GM12878 (cell line): ENCODE measurements at regions of chr6 and their contacts with region 1.

Region 1: DNA sequence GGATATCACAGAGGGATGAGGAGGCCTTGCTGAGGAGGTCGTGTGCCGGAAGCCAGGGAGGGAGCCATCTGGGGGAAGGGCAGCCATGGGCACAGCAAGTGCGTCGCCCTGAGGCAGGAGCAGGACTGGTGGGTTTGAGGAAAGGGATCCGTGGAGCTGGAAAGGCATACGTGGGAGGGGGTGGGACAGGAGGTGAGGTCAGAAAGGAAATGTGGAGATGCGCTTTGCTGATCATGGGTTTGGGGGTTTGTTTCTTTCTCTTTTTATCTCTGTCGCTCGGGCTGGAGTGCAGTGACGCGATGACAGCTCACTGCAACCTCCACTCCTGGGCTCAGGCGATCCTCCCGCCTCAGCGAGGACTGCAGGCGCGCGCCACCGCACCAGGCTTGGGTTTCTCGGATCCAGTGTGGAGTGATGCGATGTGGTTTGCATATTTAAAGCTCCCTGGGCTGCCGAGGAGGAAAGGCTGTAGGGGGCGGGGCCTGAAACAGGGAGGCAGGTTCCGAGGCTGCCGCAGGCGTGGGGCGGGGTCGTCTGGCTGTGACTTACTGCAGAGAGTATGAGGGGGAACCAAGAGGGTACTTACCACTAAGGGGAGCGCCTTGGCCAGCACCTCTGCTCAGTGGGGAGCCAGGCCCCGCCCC is 12.5 kb upstream of the BAK1 start:
- DNase-seq: peak; percentile 63
- ATAC-seq: peak; percentile 59
- H3K4me3 ChIP-seq: peak overlapping the region; percentile 46; the same call in 1 of the 2 replicates
- H3K27ac ChIP-seq: peak overlapping the region; percentile 23
- H3K4me1 ChIP-seq: peaks cover 44% of the 10 kb centered on the region
- H3K27me3 ChIP-seq: no peaks in the 10 kb centered on the region
- CTCF ChIP-seq: no peak
- EP300 ChIP-seq: no peak
- POLR2A ChIP-seq: no peak; the same call in 1 of the 2 replicates
- RAD21 ChIP-seq: no peak

Region 2: DNA sequence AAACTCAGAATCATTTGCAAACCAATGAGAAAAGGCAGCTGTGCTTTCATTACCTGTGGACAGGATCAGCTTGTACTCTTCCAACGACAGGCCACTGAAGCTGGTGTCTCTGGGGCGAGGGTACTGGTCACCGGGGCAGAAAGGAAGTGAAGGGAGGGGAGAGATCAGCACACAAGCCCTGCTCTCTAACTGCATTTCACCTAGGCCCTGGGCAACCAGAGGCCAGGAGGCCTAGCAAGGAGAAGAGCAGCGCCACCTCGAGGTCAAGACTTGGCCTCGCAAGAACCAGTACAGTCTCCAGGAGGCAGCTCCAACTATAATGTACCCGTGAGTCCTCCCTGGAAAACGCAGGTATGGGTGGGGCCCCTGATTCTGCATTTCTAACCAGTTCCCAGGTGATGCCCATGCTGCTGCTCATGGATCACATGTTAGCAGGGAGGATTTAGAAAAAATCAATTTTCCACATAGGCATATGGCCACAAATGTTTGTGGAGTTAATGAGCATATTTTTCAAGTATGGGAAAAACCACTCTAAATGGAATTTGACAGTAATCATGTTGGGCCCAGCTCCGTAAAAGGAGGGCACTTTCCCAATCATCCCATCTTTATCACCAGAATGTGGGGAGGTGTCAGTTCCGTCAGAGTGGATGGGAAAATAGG is 108.0 kb after region 1 on chr6:
- CTCF ChIA-PET with region 1: interaction called, 110 read pairs
- POLR2A ChIA-PET with region 1: interaction called, 6 read pairs
- RAD21 ChIA-PET with region 1: interaction called, 14 read pairs
- SMC1A ChIA-PET with region 1: interaction called, 29 read pairs
- in situ Hi-C with region 1: loop called (anchors 5 kb)
- intact Hi-C with region 1: loop called (anchors 1 kb)
- DNase-seq: no peak
- ATAC-seq: peak; percentile 94
- H3K4me3 ChIP-seq: no peak overlapping the region
- H3K27ac ChIP-seq: peak overlapping the region; percentile 24
- H3K4me1 ChIP-seq: peaks cover 20% of the 10 kb centered on the region
- H3K27me3 ChIP-seq: no peaks in the 10 kb centered on the region
- CTCF ChIP-seq: peak; percentile 85 to 89 (median 88)
- EP300 ChIP-seq: no peak
- POLR2A ChIP-seq: no peak
- RAD21 ChIP-seq: peak; percentile 75